GM23248 (cell line): ENCODE measurements at regions of chr1 and their contacts with region 1.

Region 1: GRCh38 chr1:152005360-152005912 is 11.8 kb upstream of the S100A10 start:
- DNase-seq: no peak
- H3K4me3 ChIP-seq: no peak overlapping the region
- H3K27ac ChIP-seq: no peak overlapping the region
- H3K4me1 ChIP-seq: peaks cover 13% of the 10 kb centered on the region
- H3K27me3 ChIP-seq: peaks cover 25% of the 10 kb centered on the region; the same call in 1 of the 2 replicates

Region 2: GRCh38 chr1:151611832-151612500 is 393.5 kb before region 1 on chr1 and contains the start of gene SNX27:
- in situ Hi-C with region 1: no loop called
- DNase-seq: peak; percentile 96
- H3K4me3 ChIP-seq: peak within 1 kb of the TSS; percentile 76
- H3K27ac ChIP-seq: peak within 1 kb of the TSS; percentile 65
- H3K4me1 ChIP-seq: peaks cover 34% of the 10 kb centered on the region
- H3K27me3 ChIP-seq: no peaks in the 10 kb centered on the region
- total RNA-seq, gene SNX27: 12.0 and 14.8 TPM in 2 replicates

Region 3: DNA sequence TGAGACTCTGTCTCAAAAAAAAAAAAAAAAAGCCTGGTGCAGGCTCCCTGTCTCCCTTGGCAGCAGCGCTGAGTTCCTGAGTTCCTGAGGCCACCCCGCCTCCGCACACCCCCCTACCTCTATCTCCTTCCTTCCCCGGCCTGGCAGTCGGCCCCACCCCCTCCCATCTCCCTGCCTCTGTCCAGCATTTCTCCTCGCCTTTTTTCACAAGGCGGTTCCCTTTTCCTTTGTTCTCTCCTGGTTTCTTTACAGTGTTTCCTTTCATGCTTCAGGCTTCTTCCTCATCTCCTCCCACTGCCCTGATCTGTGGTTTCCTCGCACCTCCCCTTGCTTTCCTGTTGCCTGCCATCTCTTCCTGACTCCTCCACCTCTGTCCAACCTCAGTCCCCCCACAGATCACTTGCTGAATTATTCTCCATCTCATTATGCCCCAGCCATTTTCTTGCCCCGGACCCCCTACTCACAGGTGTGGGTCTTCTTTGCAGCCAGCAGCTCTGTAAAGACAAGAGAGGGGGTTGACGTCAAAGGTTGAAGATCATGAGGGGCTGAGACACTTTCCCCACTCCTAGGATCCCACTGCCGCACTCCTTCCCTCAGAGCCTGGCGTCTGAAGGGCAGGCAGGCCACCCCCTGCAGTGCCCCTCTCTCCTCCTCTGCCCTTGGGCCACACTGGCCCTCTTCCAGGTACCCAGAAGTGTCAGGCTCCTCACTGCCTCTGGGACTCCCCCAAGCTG is 176.3 kb before region 1 on chr1:
- in situ Hi-C with region 1: no loop called
- DNase-seq: peak; percentile 32
- H3K4me3 ChIP-seq: no peak overlapping the region
- H3K27ac ChIP-seq: no peak overlapping the region
- H3K4me1 ChIP-seq: no peaks in the 10 kb centered on the region
- H3K27me3 ChIP-seq: no peaks in the 10 kb centered on the region

Region 4: DNA sequence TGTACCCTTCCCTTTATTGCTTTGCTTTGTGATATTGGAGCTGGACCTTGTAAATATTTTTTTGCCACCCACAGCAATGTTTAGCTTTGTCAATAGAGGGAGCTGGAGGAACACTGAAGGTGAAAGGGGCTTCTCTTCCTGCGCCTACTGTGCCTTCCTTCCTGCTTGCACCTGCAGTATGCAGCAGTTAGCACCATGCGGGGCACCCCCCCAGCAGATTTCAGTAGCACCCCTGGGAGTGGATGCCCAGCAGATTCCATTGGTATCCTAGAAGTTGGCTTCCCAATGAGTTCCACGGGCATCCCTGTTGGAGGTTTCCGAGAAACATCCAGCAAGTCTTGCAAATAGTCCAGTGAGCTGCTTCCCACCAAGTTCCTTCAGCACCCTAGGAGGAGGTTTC is 37.4 kb before region 1 on chr1:
- in situ Hi-C with region 1: loop called (anchors 5 kb)
- DNase-seq: peak; percentile 72
- H3K4me3 ChIP-seq: no peak overlapping the region
- H3K27ac ChIP-seq: no peak overlapping the region
- H3K4me1 ChIP-seq: peaks cover 22% of the 10 kb centered on the region
- H3K27me3 ChIP-seq: no peaks in the 10 kb centered on the region